ENCODE measurements at regions of chr9 and their contacts with region 1.

Region 1: GRCh38 chr9:96654443-96655197 is 497 bp downstream of the PRXL2C start:
- DNase-seq: peak; percentile 50
- H3K4me3 Mint-ChIP-seq: peak overlapping the region; percentile 88
- H3K27ac Mint-ChIP-seq: peak overlapping the region; percentile 72
- H3K4me1 Mint-ChIP-seq: peaks cover 11% of the 10 kb centered on the region
- H3K27me3 Mint-ChIP-seq: peaks cover 6% of the 10 kb centered on the region

Region 2: GRCh38 chr9:95004411-95005277 is 1650.0 kb before region 1 on chr9:
- intact Hi-C with region 1: no loop called
- DNase-seq: peak; percentile 32
- H3K4me3 Mint-ChIP-seq: peak overlapping the region; percentile 83
- H3K27ac Mint-ChIP-seq: peak overlapping the region; percentile 80
- H3K4me1 Mint-ChIP-seq: peaks cover 41% of the 10 kb centered on the region
- H3K27me3 Mint-ChIP-seq: peaks cover 45% of the 10 kb centered on the region

Region 3: DNA sequence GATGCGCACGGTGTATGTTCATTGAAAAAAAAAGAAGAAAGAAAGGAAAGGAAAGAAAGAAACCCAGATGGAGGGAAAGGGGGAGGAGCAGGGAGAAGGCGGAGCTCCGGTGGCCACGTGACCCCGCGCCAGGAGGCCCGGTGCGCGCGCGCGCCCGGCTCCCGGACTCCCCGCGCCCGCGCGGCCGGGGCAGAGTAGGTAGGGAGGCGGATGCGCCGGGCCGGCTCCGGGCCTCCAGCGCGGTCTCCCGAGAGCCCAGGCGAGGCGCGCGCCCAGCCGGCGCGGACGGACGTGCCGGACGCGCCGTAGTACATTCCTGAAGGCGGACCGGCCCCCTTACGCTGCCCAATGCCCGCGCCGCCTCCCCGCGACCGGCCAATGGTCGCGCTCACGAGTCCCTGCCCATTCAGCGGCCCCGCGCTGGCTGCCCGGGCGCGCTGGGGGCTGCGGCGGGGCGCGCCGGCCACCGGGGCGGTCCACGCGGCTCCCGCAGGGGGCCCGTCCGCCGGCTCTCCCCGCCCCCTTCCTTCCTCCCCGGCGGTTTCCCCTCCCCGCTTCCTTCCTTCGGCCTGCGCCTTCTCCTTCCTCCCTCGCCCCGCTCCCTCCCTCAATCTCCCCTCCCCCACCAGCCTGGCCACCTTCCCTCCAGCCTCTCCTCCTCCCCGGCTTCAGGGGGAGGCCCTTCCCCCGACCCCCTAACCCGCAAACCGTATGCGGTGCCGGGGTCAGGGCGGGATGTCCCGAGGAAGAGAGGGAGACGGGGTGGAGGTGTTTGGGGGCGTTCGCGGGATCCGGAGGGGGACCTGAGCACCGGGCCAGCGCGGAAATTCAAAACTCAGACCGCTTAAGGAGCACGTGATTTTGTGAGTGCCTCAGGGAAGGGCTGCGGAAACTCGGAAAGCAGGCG is 1143.7 kb before region 1 on chr9:
- intact Hi-C with region 1: loop called (anchors 10 kb)
- DNase-seq: peak; percentile 82
- H3K4me3 Mint-ChIP-seq: peak overlapping the region; percentile 84
- H3K27ac Mint-ChIP-seq: peak overlapping the region; percentile 88
- H3K4me1 Mint-ChIP-seq: peaks cover 41% of the 10 kb centered on the region
- H3K27me3 Mint-ChIP-seq: peaks cover 61% of the 10 kb centered on the region

Region 4: DNA sequence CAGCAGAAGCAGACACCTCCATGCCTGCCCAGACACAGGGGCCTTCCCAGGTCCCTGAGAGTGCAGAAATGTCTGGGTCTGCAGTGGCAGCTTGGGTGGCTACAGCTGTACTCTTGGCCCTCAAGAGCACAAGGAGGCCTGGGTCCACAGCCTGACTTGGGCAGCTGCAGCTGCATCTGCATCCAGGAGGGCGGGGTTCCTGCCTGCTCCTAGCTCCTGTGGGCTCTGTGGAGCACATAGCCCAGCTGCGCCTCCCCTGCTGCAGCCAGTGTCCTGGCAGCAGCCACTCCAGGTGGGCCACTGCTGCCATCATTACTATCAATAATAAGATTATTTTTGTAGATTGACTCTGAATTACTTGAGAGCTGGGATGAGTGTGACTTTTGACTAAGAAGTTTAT is 975.9 kb before region 1 on chr9:
- intact Hi-C with region 1: no loop called
- DNase-seq: no peak
- H3K4me3 Mint-ChIP-seq: no peak overlapping the region
- H3K27ac Mint-ChIP-seq: no peak overlapping the region
- H3K4me1 Mint-ChIP-seq: peaks cover 16% of the 10 kb centered on the region
- H3K27me3 Mint-ChIP-seq: peaks cover 22% of the 10 kb centered on the region

Region 5: GRCh38 chr9:96441798-96442445 is 212.7 kb before region 1 on chr9:
- intact Hi-C with region 1: loop called (anchors 1 kb)
- DNase-seq: peak; percentile 16
- H3K4me3 Mint-ChIP-seq: no peak overlapping the region
- H3K27ac Mint-ChIP-seq: no peak overlapping the region
- H3K4me1 Mint-ChIP-seq: no peaks in the 10 kb centered on the region
- H3K27me3 Mint-ChIP-seq: peaks cover 8% of the 10 kb centered on the region

Region 6: DNA sequence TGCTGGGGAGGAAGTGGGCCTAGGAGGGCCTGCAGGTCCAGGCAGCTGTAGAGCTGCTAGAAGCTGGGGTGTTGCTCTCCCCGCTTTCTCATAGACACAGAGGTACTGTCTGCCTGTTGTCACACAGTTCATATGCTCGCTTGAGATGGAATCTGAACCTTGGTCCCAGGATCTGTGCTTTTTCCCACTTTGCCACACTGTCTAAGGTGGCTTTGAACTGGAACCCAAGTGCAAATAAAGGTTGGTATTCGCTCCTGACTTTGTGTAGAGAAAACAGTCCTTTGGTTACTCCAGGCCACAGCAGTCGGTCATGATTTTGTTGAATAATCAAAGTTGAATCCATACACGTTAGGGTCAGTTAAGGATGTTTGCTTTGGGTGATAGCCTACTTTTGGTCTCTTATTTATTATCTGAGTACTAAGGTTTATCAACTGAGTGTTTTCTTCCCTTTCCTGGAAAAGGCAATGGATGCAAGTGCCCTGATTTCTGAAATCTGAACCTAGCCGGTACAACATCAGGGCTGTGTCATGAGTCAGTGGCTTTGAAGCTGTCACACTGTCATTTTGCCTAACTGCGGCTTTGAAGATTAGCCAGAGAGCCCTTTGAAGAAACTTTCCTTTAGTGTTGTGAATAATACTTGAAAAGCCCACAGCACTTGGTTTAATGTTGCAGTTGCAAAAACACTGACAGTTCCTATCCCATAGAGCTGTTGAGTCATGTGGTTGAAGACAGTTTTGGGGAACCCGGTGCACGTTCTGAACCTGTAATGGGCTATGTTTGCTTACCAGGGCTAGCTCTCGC is 163.3 kb before region 1 on chr9:
- intact Hi-C with region 1: loop called (anchors 5 kb)
- DNase-seq: no peak
- H3K4me3 Mint-ChIP-seq: no peak overlapping the region
- H3K27ac Mint-ChIP-seq: peak overlapping the region; percentile 78
- H3K4me1 Mint-ChIP-seq: peaks cover 9% of the 10 kb centered on the region
- H3K27me3 Mint-ChIP-seq: no peaks in the 10 kb centered on the region

Region 7: GRCh38 chr9:96686548-96687335 is 32.1 kb after region 1 on chr9:
- intact Hi-C with region 1: loop called (anchors 2 kb)
- DNase-seq: peak; percentile 61
- H3K4me3 Mint-ChIP-seq: peak overlapping the region; percentile 80
- H3K27ac Mint-ChIP-seq: peak overlapping the region; percentile 22
- H3K4me1 Mint-ChIP-seq: peaks cover 4% of the 10 kb centered on the region
- H3K27me3 Mint-ChIP-seq: no peaks in the 10 kb centered on the region